H1 (cell line): ENCODE measurements at regions of chr6 and their contacts with region 1.

Region 1: DNA sequence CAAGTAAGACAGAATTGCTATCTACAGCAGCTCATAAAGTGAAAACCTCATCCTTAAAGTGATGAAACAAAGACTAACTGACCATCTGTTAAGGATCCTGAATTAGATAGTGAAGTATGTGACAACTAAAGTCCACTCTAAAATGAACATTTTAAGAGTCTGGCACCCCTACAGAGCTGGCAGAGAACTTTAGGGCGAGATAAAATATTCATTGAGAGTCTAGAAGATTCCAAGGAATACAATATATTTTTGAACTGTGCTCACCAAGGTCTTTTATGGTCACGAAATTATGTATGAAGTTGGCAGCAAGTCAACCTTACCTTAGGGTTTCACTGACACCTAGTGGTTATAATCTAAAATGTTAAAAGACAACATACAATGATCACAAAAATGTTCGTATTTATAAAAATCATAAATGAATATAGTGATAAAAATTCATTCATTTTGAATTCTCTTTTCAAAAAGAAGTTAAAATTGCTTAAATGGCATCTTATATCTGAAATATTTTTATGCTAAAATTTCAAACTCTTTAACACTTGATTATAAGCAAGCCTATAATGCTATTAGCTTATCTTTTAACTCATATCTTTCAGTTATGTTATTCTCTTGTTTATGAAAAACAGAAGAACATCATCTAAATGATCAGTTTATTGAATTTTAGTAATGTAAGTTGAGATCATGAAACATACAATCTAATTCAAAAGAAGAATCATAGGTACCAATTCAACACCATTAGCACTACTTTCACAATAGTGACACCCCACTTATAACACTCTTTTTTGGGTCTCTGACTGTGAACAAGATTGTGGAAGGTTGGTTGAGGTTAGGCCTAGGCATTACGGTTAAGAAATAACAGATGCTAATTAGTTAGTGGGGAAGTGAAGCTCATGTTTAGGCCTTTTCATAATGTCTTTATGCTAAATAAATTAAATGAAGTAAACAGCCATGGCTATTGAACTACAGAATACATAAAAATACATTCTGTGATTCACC is 27.5 kb downstream of the RSPH3 start:
- DNase-seq: no peak
- H3K4me3 ChIP-seq: no peak overlapping the region
- H3K27ac ChIP-seq: no peak overlapping the region
- H3K4me1 ChIP-seq: no peaks in the 10 kb centered on the region
- H3K27me3 ChIP-seq: no peaks in the 10 kb centered on the region
- CTCF ChIP-seq: peak in 2 of 3 experiments; percentile 20 to 36; a peak in 2 of 4 replicates
- EP300 ChIP-seq: no peak
- POLR2A ChIP-seq: no peak
- RAD21 ChIP-seq: peak; percentile 84 to 91

Region 2: GRCh38 chr6:158686791-158687381 is 285.7 kb before region 1 on chr6:
- CTCF ChIA-PET with region 1: interaction called, 11 read pairs
- POLR2A ChIA-PET with region 1: no interaction called
- DNase-seq: no peak
- H3K4me3 ChIP-seq: no peak overlapping the region
- H3K27ac ChIP-seq: no peak overlapping the region
- H3K4me1 ChIP-seq: no peaks in the 10 kb centered on the region
- H3K27me3 ChIP-seq: no peaks in the 10 kb centered on the region
- CTCF ChIP-seq: no peak
- EP300 ChIP-seq: no peak
- POLR2A ChIP-seq: no peak
- RAD21 ChIP-seq: no peak

Region 3: GRCh38 chr6:158718461-158719046 is 254.0 kb before region 1 on chr6:
- CTCF ChIA-PET with region 1: interaction called, 22 read pairs
- POLR2A ChIA-PET with region 1: no interaction called
- DNase-seq: peak; percentile 77 to 82
- H3K4me3 ChIP-seq: no peak overlapping the region
- H3K27ac ChIP-seq: no peak overlapping the region
- H3K4me1 ChIP-seq: peaks cover 0 to 9% (median 3%) of the 10 kb centered on the region in 4 experiments; a peak in 4 of 7 replicates
- H3K27me3 ChIP-seq: no peaks in the 10 kb centered on the region
- CTCF ChIP-seq: peak; percentile 84 to 94 (median 93)
- EP300 ChIP-seq: no peak; a peak in 1 of 3 replicates
- POLR2A ChIP-seq: no peak
- RAD21 ChIP-seq: peak; percentile 95

Region 4: DNA sequence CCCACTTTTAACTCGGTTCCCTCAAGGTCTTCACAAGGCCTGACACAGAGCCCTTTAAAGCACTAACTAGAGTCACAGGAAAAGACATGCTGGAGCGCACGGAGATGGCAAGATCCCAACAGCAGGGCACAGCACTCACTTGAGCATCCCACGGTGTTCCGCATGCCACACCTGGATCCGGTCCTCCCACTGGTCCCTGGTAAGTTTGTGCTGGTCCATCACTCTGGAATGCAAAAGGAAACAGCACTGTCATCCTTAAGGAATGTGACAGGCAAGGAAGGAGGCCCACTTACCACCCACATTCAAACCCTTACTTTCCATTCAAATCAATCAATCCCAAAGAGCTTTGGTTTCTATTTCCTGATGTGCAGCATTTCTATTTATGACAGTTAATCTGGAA is 188.0 kb before region 1 on chr6:
- CTCF ChIA-PET with region 1: interaction called, 54 read pairs
- POLR2A ChIA-PET with region 1: no interaction called
- DNase-seq: no peak
- H3K4me3 ChIP-seq: no peak overlapping the region
- H3K27ac ChIP-seq: no peak overlapping the region
- H3K4me1 ChIP-seq: peaks cover 0 to 2% (median under 1%) of the 10 kb centered on the region in 4 experiments; a peak in 2 of 7 replicates
- H3K27me3 ChIP-seq: no peaks in the 10 kb centered on the region
- CTCF ChIP-seq: no peak
- EP300 ChIP-seq: no peak
- POLR2A ChIP-seq: no peak
- RAD21 ChIP-seq: no peak

Region 5: DNA sequence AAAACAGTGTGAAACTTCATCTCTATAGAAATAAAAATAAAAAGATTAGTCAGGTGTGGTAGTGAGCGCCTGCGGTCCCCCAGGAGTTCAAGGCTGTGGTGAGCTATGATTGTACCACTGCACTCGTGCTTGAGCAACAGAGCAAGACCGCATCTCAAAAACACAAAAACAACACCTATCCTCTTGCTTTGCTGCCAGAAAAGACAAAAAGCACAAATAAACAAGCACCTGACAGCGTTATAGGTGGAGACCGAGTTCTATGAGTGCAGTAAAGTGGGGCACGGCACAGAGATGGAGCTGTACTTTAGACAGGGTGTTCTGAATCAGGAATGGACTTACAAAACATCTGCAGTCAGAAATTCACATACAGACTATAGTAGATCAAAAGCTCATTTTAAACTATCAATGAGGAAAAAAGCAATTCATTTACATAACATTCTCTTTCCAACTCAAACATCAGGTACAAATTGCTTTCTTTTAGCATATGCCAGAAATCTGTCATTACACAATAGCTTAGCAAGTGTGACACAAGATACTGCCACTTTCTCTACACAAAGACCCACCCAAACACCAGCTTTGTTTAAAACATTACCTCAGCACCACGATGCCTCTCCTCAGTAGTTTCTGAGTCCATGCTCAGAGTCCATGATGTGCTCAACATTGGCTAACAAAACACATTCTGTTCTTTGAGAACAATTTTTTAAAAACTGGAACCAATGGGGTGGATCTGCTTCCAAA is 163.4 kb before region 1 on chr6:
- CTCF ChIA-PET with region 1: interaction called, 20 read pairs
- POLR2A ChIA-PET with region 1: interaction called, 5 read pairs
- DNase-seq: no peak
- H3K4me3 ChIP-seq: no peak overlapping the region
- H3K27ac ChIP-seq: no peak overlapping the region
- H3K4me1 ChIP-seq: peaks cover 11 to 41% (median 37%) of the 10 kb centered on the region in 4 experiments
- H3K27me3 ChIP-seq: no peaks in the 10 kb centered on the region
- CTCF ChIP-seq: no peak
- EP300 ChIP-seq: no peak
- POLR2A ChIP-seq: no peak
- RAD21 ChIP-seq: no peak

Region 6: GRCh38 chr6:158958504-158959386 is 13.8 kb before region 1 on chr6:
- CTCF ChIA-PET with region 1: interaction called, 45 read pairs
- POLR2A ChIA-PET with region 1: interaction called, 5 read pairs
- DNase-seq: no peak
- H3K4me3 ChIP-seq: no peak overlapping the region
- H3K27ac ChIP-seq: no peak overlapping the region
- H3K4me1 ChIP-seq: no peaks in the 10 kb centered on the region
- H3K27me3 ChIP-seq: no peaks in the 10 kb centered on the region
- CTCF ChIP-seq: no peak
- EP300 ChIP-seq: no peak
- POLR2A ChIP-seq: no peak
- RAD21 ChIP-seq: peak in 1 of 2 experiments; percentile 24; a peak in 1 of 4 replicates

Region 7: DNA sequence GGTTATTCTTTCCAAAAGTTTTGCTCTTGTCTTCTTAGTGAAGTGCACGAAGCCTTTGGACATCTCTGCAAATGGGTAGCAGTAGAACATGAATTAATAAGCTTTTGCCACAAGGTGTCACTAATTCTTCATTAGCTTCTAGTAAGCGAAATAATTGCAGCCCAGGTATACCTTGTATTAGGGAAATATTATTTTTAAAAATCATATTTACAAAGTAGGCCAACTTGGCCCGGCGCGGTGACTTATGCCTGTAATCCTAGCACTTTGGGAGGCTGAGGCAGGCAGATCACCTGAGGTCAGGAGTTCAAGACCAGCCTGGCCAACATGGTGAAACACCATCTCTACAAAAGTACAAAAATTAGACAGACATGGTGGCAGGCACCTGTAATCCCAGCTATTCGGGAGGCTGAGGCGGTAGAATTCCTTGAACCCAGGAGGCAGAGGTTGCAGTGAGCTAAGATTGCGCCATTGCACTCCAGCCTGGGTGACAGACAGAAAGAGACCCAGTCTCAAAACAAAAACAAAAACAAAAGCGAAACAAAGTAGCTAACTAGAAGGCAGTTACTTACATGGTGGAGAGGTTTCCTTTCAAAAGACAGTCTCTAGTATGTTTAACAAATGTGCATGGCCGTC is 36.2 kb after region 1 on chr6:
- CTCF ChIA-PET with region 1: no interaction called
- POLR2A ChIA-PET with region 1: no interaction called
- DNase-seq: no peak
- H3K4me3 ChIP-seq: no peak overlapping the region
- H3K27ac ChIP-seq: no peak overlapping the region
- H3K4me1 ChIP-seq: no peaks in the 10 kb centered on the region
- H3K27me3 ChIP-seq: no peaks in the 10 kb centered on the region
- CTCF ChIP-seq: peak in 2 of 3 experiments; percentile 15 to 43; a peak in 2 of 4 replicates
- EP300 ChIP-seq: no peak
- POLR2A ChIP-seq: no peak
- RAD21 ChIP-seq: peak; percentile 48 to 51